ENCODE measurements at regions of chr22 and their contacts with region 1.

Region 1: DNA sequence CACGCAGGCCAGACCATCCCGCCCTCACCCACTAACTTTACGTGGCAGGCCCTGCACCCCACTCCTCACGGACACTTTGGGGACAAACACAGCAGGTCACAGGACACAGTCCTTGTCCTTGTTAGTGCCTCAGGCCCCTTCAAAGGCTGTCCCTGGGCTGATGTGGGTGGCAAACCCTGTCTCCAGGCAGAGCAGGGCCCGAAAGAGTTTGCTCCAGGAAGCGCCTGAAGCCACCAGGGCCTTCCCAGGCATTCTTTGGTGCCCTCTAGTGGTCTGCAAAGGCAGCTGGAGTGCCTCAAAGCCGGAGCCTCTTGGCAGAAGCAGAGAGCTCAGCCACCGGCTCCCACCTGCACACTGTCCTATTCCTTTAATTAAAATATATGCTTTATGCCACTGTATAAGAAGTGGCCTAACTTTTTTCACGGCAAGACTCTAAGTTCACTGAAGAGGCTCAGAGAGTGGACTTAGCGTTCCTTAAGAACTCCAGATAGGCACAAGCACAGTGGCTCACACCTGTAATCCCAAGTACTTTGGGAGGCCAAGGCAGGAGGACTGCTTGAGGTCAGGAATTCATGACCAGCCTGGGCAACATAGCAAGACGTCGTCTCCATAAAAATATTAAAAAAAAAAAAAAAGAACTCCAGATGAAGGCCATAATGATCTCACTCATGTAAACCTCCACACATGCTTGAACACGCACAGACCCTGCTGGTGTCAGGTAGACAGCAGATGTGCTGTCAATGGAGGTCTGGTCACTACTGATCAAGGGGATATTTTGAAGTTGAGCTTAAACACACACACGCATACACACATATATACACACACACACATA is 11.1 kb downstream of the TXN2 start:
- DNase-seq: peak; percentile 87 to 95
- H3K4me3 ChIP-seq: no peak overlapping the region
- H3K27ac ChIP-seq: peak overlapping the region in 4 of 5 donors; percentile 76 to 94 (median 84)
- H3K4me1 ChIP-seq: peaks cover 31 to 72% (median 51%) of the 10 kb centered on the region in 4 donors
- H3K27me3 ChIP-seq: no peaks in the 10 kb centered on the region
- CTCF ChIP-seq: peak in 5 of 7 experiments; percentile 89 to 95 (median 91)
- EP300 ChIP-seq: no peak
- POLR2A ChIP-seq: no peak

Region 2: GRCh38 chr22:36301384-36301828 is 169.0 kb before region 1 on chr22:
- intact Hi-C with region 1: loop called (anchors 5 kb)
- DNase-seq: peak; percentile 83 to 92
- H3K4me3 ChIP-seq: no peak overlapping the region
- H3K27ac ChIP-seq: peak overlapping the region; percentile 5 to 77 (median 65)
- H3K4me1 ChIP-seq: peaks cover 7 to 45% (median 24%) of the 10 kb centered on the region in 4 donors
- H3K27me3 ChIP-seq: no peaks in the 10 kb centered on the region
- CTCF ChIP-seq: peak in 6 of 7 experiments; percentile 54 to 97 (median 94)
- EP300 ChIP-seq: no peak
- POLR2A ChIP-seq: no peak

Region 3: DNA sequence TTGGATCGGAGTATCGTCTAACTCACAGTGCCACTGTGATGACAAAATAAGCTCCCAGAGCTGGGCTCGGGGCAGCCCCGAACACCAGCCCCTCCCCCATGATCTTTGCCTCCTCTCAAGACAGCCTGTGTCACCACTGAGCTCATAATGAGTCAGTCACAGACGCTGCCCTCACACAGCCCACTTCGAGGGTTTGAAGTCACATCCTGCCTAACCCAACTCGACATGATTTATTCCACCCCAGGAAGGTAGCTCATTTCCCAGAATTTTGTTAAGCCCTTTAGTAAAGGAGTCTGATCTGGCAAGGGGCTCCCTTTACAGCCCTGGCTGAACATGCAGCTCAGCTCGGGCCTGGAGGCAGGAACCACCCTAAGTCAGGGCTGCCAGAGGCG is 105.4 kb before region 1 on chr22:
- intact Hi-C with region 1: loop called (anchors 10 kb)
- DNase-seq: peak; percentile 65 to 91
- H3K4me3 ChIP-seq: no peak overlapping the region
- H3K27ac ChIP-seq: peak overlapping the region; percentile 82 to 100 (median 95)
- H3K4me1 ChIP-seq: peaks cover 100% of the 10 kb centered on the region in 4 donors
- H3K27me3 ChIP-seq: no peaks in the 10 kb centered on the region
- CTCF ChIP-seq: no peak
- EP300 ChIP-seq: peak; percentile 54
- POLR2A ChIP-seq: no peak